Motor neuron (in vitro differentiated cells): ENCODE measurements at regions of chr6 and their contacts with region 1.

Region 1: DNA sequence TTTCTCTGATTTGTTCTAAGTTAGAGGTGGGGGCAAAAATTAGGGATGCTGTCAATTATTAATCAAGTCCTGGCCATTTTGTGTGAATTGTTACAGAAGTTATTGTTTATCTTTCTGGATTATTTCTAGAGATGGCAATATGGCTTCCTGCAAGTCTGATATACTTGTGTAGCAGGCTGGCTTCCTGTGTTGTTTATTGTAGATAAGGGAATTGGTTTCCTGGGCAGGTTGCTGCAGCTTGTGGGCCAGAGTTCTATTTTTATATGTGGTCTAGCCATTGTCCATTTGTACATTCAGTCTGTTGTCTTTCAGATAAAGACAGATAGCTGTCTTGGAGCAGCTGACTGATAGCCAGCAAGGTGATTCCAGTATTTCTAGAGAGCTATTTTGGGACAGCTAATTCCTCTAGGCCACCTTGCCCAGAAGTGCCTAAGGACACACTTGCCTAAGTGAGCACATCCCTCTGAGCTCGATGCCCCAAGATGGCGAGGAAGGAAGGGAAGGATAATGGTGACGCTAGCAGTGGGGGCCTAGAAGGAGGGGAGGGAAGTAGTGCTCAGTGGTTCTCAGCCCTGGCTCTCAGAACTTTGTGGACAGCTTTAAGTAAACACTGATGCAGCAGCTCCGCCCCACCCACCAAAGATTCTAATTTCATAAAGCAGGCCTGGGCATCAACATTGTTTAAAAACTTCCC is 25.5 kb downstream of the DDO start:
- ATAC-seq: no peak
- H3K4me3 ChIP-seq: no peak overlapping the region
- H3K27ac ChIP-seq: no peak overlapping the region
- H3K4me1 ChIP-seq: peaks cover 7 to 13% of the 10 kb centered on the region in 2 donors

Region 2: DNA sequence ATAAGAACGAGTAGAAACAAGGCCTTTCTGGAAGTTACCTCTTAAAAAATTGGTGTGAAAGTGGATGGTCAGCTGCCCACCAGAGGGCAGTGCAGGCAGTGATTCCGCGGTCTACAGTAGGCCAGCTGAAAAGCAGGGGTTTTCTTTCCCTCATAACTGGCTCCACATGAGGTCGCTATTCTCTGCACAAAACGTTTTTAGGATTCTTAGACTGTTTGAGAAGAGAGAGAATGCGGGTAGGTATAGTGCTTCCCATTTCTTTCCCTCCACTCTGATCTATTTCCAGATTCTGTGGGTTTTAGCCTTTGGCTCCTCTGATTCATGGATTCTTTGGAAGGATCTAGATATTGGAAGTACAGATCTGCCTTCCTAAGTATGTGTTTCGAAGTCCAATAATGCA is 684.6 kb before region 1 on chr6:
- in situ Hi-C with region 1: loop called in 8 of 9 experiments (anchors 10 to 25 kb)
- ATAC-seq: peak; percentile 95 to 100 (median 98)
- H3K4me3 ChIP-seq: no peak overlapping the region
- H3K27ac ChIP-seq: no peak overlapping the region
- H3K4me1 ChIP-seq: no peaks in the 10 kb centered on the region

Region 3: GRCh38 chr6:111129013-111129412 is 739.2 kb after region 1 on chr6:
- in situ Hi-C with region 1: no loop called
- ATAC-seq: no peak
- H3K4me3 ChIP-seq: no peak overlapping the region
- H3K27ac ChIP-seq: no peak overlapping the region
- H3K4me1 ChIP-seq: no peaks in the 10 kb centered on the region